Heart right ventricle (tissue), 16 donors: ENCODE measurements at regions of chr10 and their contacts with region 1.

Region 1: DNA sequence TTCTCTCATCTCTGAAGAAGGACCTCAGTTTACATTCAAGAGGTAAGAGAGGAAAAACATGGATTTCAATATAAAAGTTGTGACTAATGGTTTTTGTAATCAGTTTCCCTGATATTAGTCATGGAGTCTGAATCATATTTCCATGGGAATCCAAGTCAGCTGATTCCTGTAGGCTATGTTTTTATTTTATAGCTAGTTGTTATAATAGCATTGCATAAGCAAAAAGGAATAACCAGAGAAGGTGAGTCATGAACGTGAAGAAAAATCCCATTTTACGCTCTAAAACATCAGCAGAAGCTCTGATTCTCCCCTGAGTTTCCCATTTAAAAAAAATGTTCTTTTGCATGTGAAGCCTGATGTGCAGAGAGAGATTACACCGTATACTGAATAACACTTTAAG is 299.3 kb downstream of the SFMBT2 start:
- DNase-seq: no peak
- ATAC-seq: no peak
- H3K4me3 ChIP-seq: no peak overlapping the region
- H3K27ac ChIP-seq: no peak overlapping the region
- H3K4me1 ChIP-seq: no peaks in the 10 kb centered on the region
- H3K27me3 ChIP-seq: peaks cover 0 to 15% (median 0%) of the 10 kb centered on the region in 7 donors
- CTCF ChIP-seq: no peak

Region 2: GRCh38 chr10:6920072-6921019 is 191.2 kb before region 1 on chr10:
- intact Hi-C with region 1: loop called in 2 of 10 experiments (anchors 10 kb)
- DNase-seq: peak; percentile 59 to 62
- ATAC-seq: peak; percentile 83 to 95 (median 90)
- H3K4me3 ChIP-seq: no peak overlapping the region
- H3K27ac ChIP-seq: peak overlapping the region in 1 of 10 donors; percentile 9
- H3K4me1 ChIP-seq: peaks cover 0 to 15% (median 5%) of the 10 kb centered on the region in 9 donors
- H3K27me3 ChIP-seq: peaks cover 0 to 3% (median 0%) of the 10 kb centered on the region in 7 donors
- CTCF ChIP-seq: peak; percentile 28 to 75 (median 65)